Esophagus muscularis mucosa (tissue), 4 donors: ENCODE measurements at regions of chr1 and their contacts with region 1.

Region 1: DNA sequence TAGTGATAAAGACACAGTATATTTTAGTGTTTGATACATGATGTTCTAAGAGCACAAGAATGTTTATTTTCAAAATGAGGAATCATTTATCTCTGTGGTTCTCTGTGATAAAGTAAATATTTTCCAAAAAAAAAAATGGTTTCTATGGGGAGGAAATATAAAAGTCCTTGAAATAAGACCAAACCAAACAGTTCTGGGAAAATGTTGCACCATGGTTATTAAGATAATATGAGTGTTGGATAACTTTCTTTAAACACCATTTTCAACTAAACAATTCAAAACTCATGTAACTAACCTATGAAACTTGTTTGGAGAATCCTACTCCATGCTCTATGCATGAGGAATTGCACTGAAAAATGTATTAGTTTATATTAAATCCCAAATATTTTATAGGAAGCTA is 184.6 kb downstream of the KCNT2 start:
- DNase-seq: no peak
- H3K4me3 ChIP-seq: no peak overlapping the region
- H3K27ac ChIP-seq: peak overlapping the region in 1 of 4 donors; percentile 43
- H3K4me1 ChIP-seq: peaks cover 0 to 38% (median 6%) of the 10 kb centered on the region in 4 donors
- H3K27me3 ChIP-seq: no peaks in the 10 kb centered on the region
- CTCF ChIP-seq: no peak
- EP300 ChIP-seq: no peak
- POLR2A ChIP-seq: no peak

Region 2: DNA sequence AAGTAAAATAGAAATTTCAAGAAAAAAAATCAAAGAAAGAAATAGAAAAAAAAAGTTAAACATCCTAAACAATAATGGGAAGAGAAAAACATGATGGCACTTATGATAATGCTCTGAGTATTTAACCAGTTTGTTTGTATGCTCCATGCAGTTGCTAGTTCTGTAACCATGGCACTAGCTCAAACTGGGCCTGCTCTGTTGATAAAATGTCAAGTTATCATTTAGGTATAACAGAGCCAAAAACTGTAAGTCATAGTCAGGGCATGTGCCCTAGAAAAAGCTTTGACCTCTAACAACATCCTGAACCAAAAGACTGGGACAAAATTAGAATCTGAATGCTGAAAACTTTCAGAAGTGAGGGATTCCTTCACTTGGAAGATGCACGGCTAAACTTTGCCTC is 35.8 kb after region 1 on chr1:
- intact Hi-C with region 1: loop called (anchors 5 kb)
- DNase-seq: no peak
- H3K4me3 ChIP-seq: no peak overlapping the region
- H3K27ac ChIP-seq: peak overlapping the region; percentile 48 to 67 (median 64)
- H3K4me1 ChIP-seq: peaks cover 0 to 25% (median 16%) of the 10 kb centered on the region in 4 donors
- H3K27me3 ChIP-seq: no peaks in the 10 kb centered on the region
- CTCF ChIP-seq: no peak
- EP300 ChIP-seq: no peak
- POLR2A ChIP-seq: no peak